ENCODE measurements at regions of chr1 and their contacts with region 1.

Region 1: DNA sequence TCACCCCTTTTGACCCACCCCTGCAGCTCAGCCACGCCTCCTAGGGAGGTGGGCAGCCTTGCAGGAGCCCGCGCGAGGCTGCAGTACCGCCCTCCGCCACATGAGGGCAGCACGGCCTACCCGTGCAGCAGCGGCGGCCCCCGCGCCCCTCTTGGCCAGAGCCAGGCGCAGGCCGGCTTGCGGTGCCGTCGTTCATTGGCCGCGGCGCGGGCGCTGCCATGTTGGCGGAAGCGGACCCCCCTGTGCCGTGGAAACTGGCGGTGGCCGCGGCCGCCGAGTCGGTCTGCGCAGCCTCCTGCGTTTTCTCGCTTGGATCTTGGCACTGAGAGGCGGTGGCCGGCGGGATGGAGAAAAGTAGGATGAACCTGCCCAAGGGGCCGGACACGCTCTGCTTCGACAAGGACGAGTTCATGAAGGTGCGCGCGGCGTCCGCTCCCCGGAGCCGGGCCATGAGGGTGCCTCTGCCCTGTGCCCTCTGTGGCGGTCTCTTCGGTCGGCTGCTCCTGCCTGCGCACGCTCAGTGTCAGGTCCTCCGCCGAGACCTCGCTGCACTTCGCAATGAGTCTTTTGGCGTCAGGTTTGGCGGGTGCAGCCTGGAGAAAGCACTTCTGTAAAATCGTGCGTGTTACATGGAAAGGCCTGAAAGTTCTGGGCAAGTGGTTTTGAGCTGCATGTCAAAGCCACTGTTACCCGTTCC is at the start of gene COG2:
- DNase-seq: peak; percentile 93 to 96 (median 94)
- ATAC-seq: peak; percentile 99
- H3K4me3 ChIP-seq: peak within 1 kb of the TSS; percentile 80 to 95
- H3K27ac ChIP-seq: peak within 1 kb of the TSS; percentile 53 to 90 (median 82)
- H3K4me1 ChIP-seq: peaks cover 47% of the 10 kb centered on the region
- H3K27me3 ChIP-seq: no peaks in the 10 kb centered on the region
- CTCF ChIP-seq: peak; percentile 97 to 100 (median 100)
- POLR2A ChIP-seq: peak; percentile 61 to 87 (median 85)
- total RNA-seq, gene COG2: 13.7 to 26.0 TPM

Region 2: DNA sequence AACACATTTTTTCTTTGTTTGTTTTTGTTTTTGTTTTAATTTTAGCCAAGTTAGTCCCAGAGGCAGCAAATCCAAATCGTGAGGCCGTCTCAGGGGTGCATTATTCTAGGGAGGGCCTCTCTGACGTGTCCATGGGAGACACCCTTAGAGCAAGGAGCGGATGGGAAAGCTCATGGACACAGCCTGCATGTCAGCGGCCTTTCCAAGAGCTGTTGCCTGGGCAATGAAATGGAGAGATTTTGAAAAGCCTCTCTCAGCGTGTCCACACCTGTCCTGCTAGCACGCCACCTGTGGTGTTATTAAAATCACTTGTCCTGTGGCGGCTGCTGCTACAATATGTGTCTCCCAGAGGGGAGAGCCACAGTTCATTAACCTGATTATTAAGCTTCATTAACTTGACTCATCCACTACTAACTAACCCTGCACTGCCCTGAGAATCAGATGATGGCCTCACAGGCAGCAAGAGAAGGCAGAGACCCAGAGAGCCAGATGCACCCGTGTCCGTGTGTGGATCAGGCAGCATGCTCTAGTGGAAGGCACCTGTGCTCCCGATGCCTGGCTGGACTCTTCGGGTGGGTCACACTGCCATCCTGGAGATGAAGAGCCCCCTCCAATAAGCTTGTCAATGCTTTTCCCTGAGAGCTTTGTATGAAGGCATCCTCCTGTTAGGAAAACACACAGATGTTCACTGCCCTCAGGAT is 349.6 kb before region 1 on chr1:
- intact Hi-C with region 1: no loop called
- DNase-seq: peak in 2 of 4 donors; percentile 13 to 32
- ATAC-seq: no peak
- H3K4me3 ChIP-seq: no peak overlapping the region
- H3K27ac ChIP-seq: no peak overlapping the region
- H3K4me1 ChIP-seq: no peaks in the 10 kb centered on the region
- H3K27me3 ChIP-seq: no peaks in the 10 kb centered on the region
- CTCF ChIP-seq: no peak
- POLR2A ChIP-seq: no peak

Region 3: GRCh38 chr1:230772457-230773395 is 130.3 kb after region 1 on chr1:
- intact Hi-C with region 1: loop called (anchors 10 kb)
- DNase-seq: peak in 3 of 4 donors; percentile 47 to 66 (median 52)
- ATAC-seq: peak; percentile 60
- H3K4me3 ChIP-seq: no peak overlapping the region
- H3K27ac ChIP-seq: no peak overlapping the region
- H3K4me1 ChIP-seq: peaks cover 16% of the 10 kb centered on the region
- H3K27me3 ChIP-seq: no peaks in the 10 kb centered on the region
- CTCF ChIP-seq: peak; percentile 20 to 79 (median 59)
- POLR2A ChIP-seq: no peak

Region 4: DNA sequence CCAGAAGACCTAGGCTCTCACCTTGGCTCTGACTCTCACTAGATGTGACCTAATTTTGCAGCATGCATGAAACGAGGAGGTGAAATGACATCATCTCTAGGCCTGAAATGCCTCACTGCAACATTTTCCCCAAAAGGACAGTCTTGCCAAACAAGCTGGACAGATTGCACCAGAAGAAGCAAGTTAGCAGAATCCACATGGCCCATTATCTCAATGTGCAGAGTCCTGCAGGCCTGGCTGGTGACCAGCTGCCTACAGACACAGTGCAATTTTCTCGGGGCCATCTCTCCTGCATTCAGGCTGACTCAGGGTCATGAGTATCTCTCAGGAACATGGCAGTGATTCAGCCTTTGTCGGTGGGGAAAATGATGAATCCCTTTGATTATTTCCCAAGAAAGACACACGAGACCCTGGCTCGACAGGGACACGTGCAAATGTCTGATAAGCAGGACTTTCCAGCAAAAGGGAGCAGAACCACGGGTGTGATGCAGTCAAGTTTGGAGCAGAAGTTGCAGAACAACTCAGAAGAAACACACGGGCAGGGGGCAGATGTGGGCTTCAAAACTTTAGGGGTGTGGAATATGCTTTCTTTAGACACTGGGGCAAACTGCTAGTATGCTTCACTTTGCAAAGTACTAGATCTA is 558.1 kb after region 1 on chr1:
- intact Hi-C with region 1: no loop called
- DNase-seq: no peak
- ATAC-seq: no peak
- H3K4me3 ChIP-seq: no peak overlapping the region
- H3K27ac ChIP-seq: no peak overlapping the region
- H3K4me1 ChIP-seq: peaks cover 3% of the 10 kb centered on the region
- H3K27me3 ChIP-seq: no peaks in the 10 kb centered on the region
- CTCF ChIP-seq: no peak
- POLR2A ChIP-seq: no peak

Measured in body of pancreas (tissue), 4 donors.